ENCODE measurements at regions of chr2 and their contacts with region 1.

Region 1: DNA sequence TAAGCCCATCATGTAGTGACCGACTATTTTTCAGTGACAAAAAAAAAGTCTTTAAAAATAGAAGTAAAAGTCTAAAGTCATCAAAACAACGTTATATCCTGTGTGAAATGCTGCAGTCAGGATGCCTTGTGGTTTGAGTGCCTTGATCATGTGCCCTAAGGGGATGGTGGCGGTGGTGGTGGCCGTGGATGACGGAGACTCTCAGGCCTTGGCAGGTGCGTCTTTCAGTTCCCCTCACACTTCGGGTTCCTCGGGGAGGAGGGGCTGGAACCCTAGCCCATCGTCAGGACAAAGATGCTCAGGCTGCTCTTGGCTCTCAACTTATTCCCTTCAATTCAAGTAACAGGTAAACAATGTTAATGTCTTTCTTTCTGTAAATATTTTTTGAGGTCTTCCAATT is at the start of gene CD28:
- DNase-seq: peak; percentile 97
- H3K4me3 Mint-ChIP-seq: peak within 1 kb of the TSS; percentile 89
- H3K27ac Mint-ChIP-seq: peak within 1 kb of the TSS; percentile 93
- H3K4me1 Mint-ChIP-seq: peaks cover 37% of the 10 kb centered on the region
- H3K27me3 Mint-ChIP-seq: no peaks in the 10 kb centered on the region
- total RNA-seq, gene CD28: 165 to 167 TPM

Region 2: GRCh38 chr2:203656522-203657287 is 49.7 kb before region 1 on chr2:
- CTCF ChIA-PET with region 1: no interaction called
- intact Hi-C with region 1: loop called (anchors 2 kb)
- DNase-seq: peak; percentile 64
- H3K4me3 Mint-ChIP-seq: no peak overlapping the region
- H3K27ac Mint-ChIP-seq: peak overlapping the region; percentile 55
- H3K4me1 Mint-ChIP-seq: peaks cover 39% of the 10 kb centered on the region
- H3K27me3 Mint-ChIP-seq: no peaks in the 10 kb centered on the region

Region 3: GRCh38 chr2:203718087-203718486 is 11.7 kb after region 1 on chr2:
- CTCF ChIA-PET with region 1: interaction called, 14 read pairs
- intact Hi-C with region 1: loop called (anchors 1 kb)
- DNase-seq: peak; percentile 75
- H3K4me3 Mint-ChIP-seq: peak overlapping the region; percentile 60
- H3K27ac Mint-ChIP-seq: peak overlapping the region; percentile 95
- H3K4me1 Mint-ChIP-seq: peaks cover 97% of the 10 kb centered on the region
- H3K27me3 Mint-ChIP-seq: no peaks in the 10 kb centered on the region

Region 4: GRCh38 chr2:203748331-203749126 is 42.1 kb after region 1 on chr2:
- CTCF ChIA-PET with region 1: interaction called, 3 read pairs
- intact Hi-C with region 1: loop called (anchors 1 kb)
- DNase-seq: peak; percentile 67
- H3K4me3 Mint-ChIP-seq: peak overlapping the region; percentile 32
- H3K27ac Mint-ChIP-seq: peak overlapping the region; percentile 89
- H3K4me1 Mint-ChIP-seq: peaks cover 79% of the 10 kb centered on the region
- H3K27me3 Mint-ChIP-seq: no peaks in the 10 kb centered on the region

Region 5: DNA sequence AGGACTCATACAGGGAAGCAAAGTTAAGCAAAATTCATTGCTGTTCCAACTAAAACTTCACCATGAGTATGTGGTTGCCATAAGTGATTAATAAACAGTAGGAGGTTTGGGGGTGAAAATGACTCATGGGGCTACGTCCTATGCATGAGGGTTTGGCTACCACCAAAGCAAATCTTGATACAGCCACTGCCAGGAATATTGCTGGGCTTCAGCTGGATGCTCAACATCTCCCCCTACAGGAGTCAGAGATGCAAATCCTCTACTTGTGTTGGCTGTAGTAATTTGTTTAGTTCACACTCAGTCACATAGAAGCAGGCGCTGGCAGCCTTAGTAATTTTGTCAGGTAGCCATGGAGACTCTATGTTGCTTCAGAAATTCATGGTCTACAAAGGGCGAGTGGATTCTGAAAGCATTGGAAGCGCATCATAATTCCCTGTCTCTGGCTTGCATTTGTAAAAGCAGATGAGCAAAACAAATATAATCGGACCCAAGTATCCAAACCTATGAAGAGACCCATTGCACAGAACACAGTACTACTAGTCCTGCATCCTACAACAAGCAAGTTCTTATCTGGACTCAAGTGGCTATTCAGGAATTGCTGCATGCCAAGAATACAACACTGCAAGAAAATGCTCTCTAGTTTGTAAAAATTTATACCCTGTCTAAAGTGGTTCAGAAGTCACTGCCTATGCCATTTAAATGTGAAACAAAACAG is 76.0 kb after region 1 on chr2:
- CTCF ChIA-PET with region 1: interaction called, 3 read pairs
- intact Hi-C with region 1: loop called (anchors 1 kb)
- DNase-seq: peak; percentile 86
- H3K4me3 Mint-ChIP-seq: no peak overlapping the region
- H3K27ac Mint-ChIP-seq: peak overlapping the region; percentile 64
- H3K4me1 Mint-ChIP-seq: peaks cover 50% of the 10 kb centered on the region
- H3K27me3 Mint-ChIP-seq: no peaks in the 10 kb centered on the region

Region 6: GRCh38 chr2:203871371-203871983 is 165.1 kb after region 1 on chr2:
- CTCF ChIA-PET with region 1: no interaction called
- intact Hi-C with region 1: loop called (anchors 1 kb)
- DNase-seq: peak; percentile 69
- H3K4me3 Mint-ChIP-seq: peak overlapping the region; percentile 92
- H3K27ac Mint-ChIP-seq: peak overlapping the region; percentile 99
- H3K4me1 Mint-ChIP-seq: peaks cover 55% of the 10 kb centered on the region
- H3K27me3 Mint-ChIP-seq: no peaks in the 10 kb centered on the region

Measured in activated naive CD4-positive, alpha-beta T cell treated with anti-CD3 and anti-CD28 coated beads for 36 hours (primary cell).